Gastrocnemius medialis (tissue), 4 donors: ENCODE measurements at regions of chr9 and their contacts with region 1.

Region 1: GRCh38 chr9:85610074-85610860 is 131.5 kb downstream of the AGTPBP1 start:
- DNase-seq: no peak
- ATAC-seq: peak; percentile 80 to 90
- H3K4me3 ChIP-seq: peak overlapping the region; percentile 21 to 27 (median 24)
- H3K27ac ChIP-seq: peak overlapping the region in 2 of 4 donors; percentile 12 to 22
- H3K4me1 ChIP-seq: no peaks in the 10 kb centered on the region
- H3K27me3 ChIP-seq: no peaks in the 10 kb centered on the region
- CTCF ChIP-seq: peak; percentile 50 to 85 (median 74)
- POLR2A ChIP-seq: no peak

Region 2: GRCh38 chr9:85508616-85509015 is 101.7 kb before region 1 on chr9:
- in situ Hi-C with region 1: no loop called
- intact Hi-C with region 1: loop called (anchors 2 kb)
- DNase-seq: no peak
- ATAC-seq: no peak
- H3K4me3 ChIP-seq: no peak overlapping the region
- H3K27ac ChIP-seq: no peak overlapping the region
- H3K4me1 ChIP-seq: no peaks in the 10 kb centered on the region
- H3K27me3 ChIP-seq: no peaks in the 10 kb centered on the region
- CTCF ChIP-seq: peak in 1 of 5 experiments; percentile 14
- POLR2A ChIP-seq: no peak